ENCODE measurements at regions of chr15 and their contacts with region 1.

Region 1: DNA sequence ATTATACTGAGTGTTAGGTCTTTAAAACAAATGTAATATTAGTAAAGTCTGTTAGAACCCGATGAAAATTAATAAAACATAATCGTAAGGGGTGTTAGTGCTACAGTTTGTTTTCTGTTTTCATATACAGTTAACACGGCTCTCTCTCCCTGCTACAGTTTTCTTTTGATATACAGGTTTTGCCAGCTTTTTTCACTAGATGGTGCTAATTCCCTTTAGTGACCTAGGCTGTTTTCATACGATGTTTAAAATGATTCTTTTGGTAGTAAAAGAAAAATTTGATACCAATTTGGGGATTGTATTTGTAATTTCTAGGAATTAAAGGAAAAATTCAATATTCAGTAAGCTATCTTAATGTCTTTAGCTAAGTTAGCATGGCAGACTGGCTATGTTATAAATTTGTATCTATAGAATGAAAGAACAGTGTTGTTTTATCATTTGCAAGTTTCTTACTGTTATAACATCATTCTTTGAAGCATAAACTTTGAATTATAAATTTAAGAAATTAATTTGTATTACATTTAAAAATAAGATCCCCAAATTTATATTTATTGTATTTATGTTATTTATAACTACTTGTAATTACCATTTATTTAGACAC is 11.5 kb downstream of the APH1B start:
- DNase-seq: peak; percentile 80
- H3K4me3 ChIP-seq: no peak overlapping the region
- H3K27ac ChIP-seq: no peak overlapping the region
- H3K4me1 ChIP-seq: peaks cover 46% of the 10 kb centered on the region
- H3K27me3 ChIP-seq: no peaks in the 10 kb centered on the region
- CTCF ChIP-seq: peak; percentile 34 to 41
- POLR2A ChIP-seq: no peak

Region 2: GRCh38 chr15:62782039-62782791 is 506.7 kb before region 1 on chr15:
- CTCF ChIA-PET with region 1: no interaction called
- POLR2A ChIA-PET with region 1: no interaction called
- dilution Hi-C with region 1: no loop called
- intact Hi-C with region 1: loop called (anchors 2 kb)
- DNase-seq: peak; percentile 90
- H3K4me3 ChIP-seq: no peak overlapping the region
- H3K27ac ChIP-seq: no peak overlapping the region
- H3K4me1 ChIP-seq: peaks cover 8% of the 10 kb centered on the region
- H3K27me3 ChIP-seq: no peaks in the 10 kb centered on the region
- CTCF ChIP-seq: peak; percentile 73 to 77
- POLR2A ChIP-seq: no peak

Region 3: GRCh38 chr15:63048115-63048775 is 240.6 kb before region 1 on chr15:
- CTCF ChIA-PET with region 1: interaction called, 10 read pairs
- POLR2A ChIA-PET with region 1: no interaction called
- dilution Hi-C with region 1: no loop called
- intact Hi-C with region 1: loop called (anchors 2 kb)
- DNase-seq: peak; percentile 94
- H3K4me3 ChIP-seq: peak overlapping the region; percentile 72 to 87 (median 78)
- H3K27ac ChIP-seq: peak overlapping the region; percentile 68
- H3K4me1 ChIP-seq: peaks cover 81% of the 10 kb centered on the region
- H3K27me3 ChIP-seq: no peaks in the 10 kb centered on the region
- CTCF ChIP-seq: peak; percentile 92 to 95
- POLR2A ChIP-seq: peak; percentile 66

Region 4: GRCh38 chr15:63157118-63157843 is 131.6 kb before region 1 on chr15 and contains the start of gene RPS27L:
- CTCF ChIA-PET with region 1: no interaction called
- POLR2A ChIA-PET with region 1: no interaction called
- dilution Hi-C with region 1: no loop called
- intact Hi-C with region 1: loop called (anchors 1 kb)
- DNase-seq: peak; percentile 92
- H3K4me3 ChIP-seq: peak within 1 kb of the TSS; percentile 54 to 98 (median 88)
- H3K27ac ChIP-seq: peak within 1 kb of the TSS; percentile 71
- H3K4me1 ChIP-seq: peaks cover 11% of the 10 kb centered on the region
- H3K27me3 ChIP-seq: no peaks in the 10 kb centered on the region
- CTCF ChIP-seq: no peak
- POLR2A ChIP-seq: peak; percentile 99
- total RNA-seq, gene RPS27L: 338 and 345 TPM in 2 replicates

Region 5: GRCh38 chr15:63188926-63189871 is 99.7 kb before region 1 on chr15 and contains the start of gene RAB8B:
- CTCF ChIA-PET with region 1: interaction called, 5 read pairs
- POLR2A ChIA-PET with region 1: no interaction called
- dilution Hi-C with region 1: no loop called
- intact Hi-C with region 1: loop called (anchors 1 kb)
- DNase-seq: peak; percentile 94
- H3K4me3 ChIP-seq: peak within 1 kb of the TSS; percentile 62 to 88 (median 74)
- H3K27ac ChIP-seq: peak within 1 kb of the TSS; percentile 58
- H3K4me1 ChIP-seq: peaks cover 30% of the 10 kb centered on the region
- H3K27me3 ChIP-seq: no peaks in the 10 kb centered on the region
- CTCF ChIP-seq: no peak
- POLR2A ChIP-seq: peak; percentile 86
- total RNA-seq, gene RAB8B: 50.3 and 52.5 TPM in 2 replicates

Region 6: GRCh38 chr15:63504247-63504978 is 215.5 kb after region 1 on chr15 and contains the start of gene USP3:
- CTCF ChIA-PET with region 1: interaction called, 3 read pairs
- POLR2A ChIA-PET with region 1: no interaction called
- dilution Hi-C with region 1: no loop called
- intact Hi-C with region 1: loop called (anchors 5 kb)
- DNase-seq: peak; percentile 96
- H3K4me3 ChIP-seq: peak within 1 kb of the TSS; percentile 55 to 87 (median 85)
- H3K27ac ChIP-seq: peak within 1 kb of the TSS; percentile 92
- H3K4me1 ChIP-seq: peaks cover 61% of the 10 kb centered on the region
- H3K27me3 ChIP-seq: no peaks in the 10 kb centered on the region
- CTCF ChIP-seq: peak in 1 of 2 donors; percentile 32
- POLR2A ChIP-seq: peak; percentile 80
- total RNA-seq, gene USP3: 52.4 and 57.2 TPM in 2 replicates

Region 7: DNA sequence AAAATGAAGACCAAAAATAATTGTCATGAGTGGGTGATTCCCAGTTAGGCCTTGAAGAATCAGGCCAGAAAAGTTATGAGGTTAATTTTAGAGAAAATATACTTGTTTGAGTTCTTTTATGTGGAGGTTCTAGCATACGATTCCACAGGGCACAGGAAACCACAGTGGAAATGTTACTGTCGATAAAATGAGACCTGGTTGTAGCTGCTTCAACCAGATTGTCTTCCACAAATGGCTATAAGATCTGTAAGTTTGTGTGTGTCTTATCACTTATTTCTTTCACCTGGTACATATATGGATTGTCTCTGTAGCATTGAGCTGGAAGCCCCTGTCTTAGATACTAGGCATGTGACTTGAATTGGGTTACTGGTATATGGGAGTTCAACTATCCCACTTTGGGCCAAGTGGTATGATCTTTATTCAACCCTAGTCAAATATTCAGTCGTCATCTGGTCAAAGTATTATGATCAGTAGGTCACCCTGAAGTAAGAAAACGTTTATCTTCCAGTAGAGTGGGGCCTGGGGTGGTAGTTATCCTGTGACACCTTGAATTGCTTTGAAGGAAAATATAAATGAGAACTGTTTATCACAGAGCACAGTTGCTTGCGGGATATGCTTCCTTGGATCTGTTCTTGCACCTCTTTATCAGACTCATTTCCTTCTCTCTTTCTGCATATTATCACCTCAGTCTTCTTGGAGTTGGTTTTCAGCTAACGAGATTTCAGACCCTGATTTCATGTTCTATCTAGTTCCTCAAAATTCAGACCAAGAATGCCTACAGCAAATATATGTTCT is 1150.0 kb after region 1 on chr15:
- CTCF ChIA-PET with region 1: no interaction called
- POLR2A ChIA-PET with region 1: no interaction called
- dilution Hi-C with region 1: no loop called
- intact Hi-C with region 1: no loop called
- DNase-seq: no peak
- H3K4me3 ChIP-seq: no peak overlapping the region
- H3K27ac ChIP-seq: no peak overlapping the region
- H3K4me1 ChIP-seq: peaks cover 13% of the 10 kb centered on the region
- H3K27me3 ChIP-seq: no peaks in the 10 kb centered on the region
- CTCF ChIP-seq: no peak
- POLR2A ChIP-seq: no peak

Measured in endothelial cell of umbilical vein (primary cell).